ENCODE measurements at regions of chr6 and their contacts with region 1.

Region 1: GRCh38 chr6:117449549-117450439 is 24.1 kb upstream of the ROS1 start:
- DNase-seq: peak; percentile 77
- ATAC-seq: no peak
- H3K4me3 ChIP-seq: no peak overlapping the region; the same call in 1 of the 2 replicates
- H3K27ac ChIP-seq: peak overlapping the region; percentile 79
- H3K4me1 ChIP-seq: peaks cover 36% of the 10 kb centered on the region
- H3K27me3 ChIP-seq: no peaks in the 10 kb centered on the region
- CTCF ChIP-seq: peak; percentile 81

Region 2: GRCh38 chr6:117352466-117353081 is 97.2 kb before region 1 on chr6:
- CTCF ChIA-PET with region 1: no interaction called
- POLR2A ChIA-PET with region 1: no interaction called
- intact Hi-C with region 1: loop called (anchors 1 kb)
- DNase-seq: peak; percentile 68
- ATAC-seq: peak; percentile 67
- H3K4me3 ChIP-seq: no peak overlapping the region
- H3K27ac ChIP-seq: no peak overlapping the region
- H3K4me1 ChIP-seq: peaks cover 4% of the 10 kb centered on the region
- H3K27me3 ChIP-seq: no peaks in the 10 kb centered on the region
- CTCF ChIP-seq: peak; percentile 64

Region 3: DNA sequence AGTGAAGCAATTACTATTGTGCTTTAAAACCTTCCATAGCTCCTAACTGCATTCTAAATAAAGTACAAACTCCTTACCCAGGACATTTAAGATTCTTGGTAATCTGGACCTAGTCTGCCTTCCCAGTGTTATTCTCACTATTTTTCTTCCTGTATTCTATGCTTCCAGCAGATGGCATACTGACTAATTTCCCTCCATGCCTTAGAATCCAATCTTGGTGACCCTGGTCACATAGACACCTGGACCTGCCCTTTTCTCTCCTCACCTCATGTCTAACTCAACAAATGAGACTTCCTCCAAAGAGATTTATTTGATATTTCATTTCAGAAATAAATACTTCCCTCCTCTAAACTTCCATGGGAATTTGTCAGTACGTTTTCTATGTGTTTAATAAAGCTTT is 49.9 kb before region 1 on chr6:
- CTCF ChIA-PET with region 1: interaction called, 3 read pairs
- POLR2A ChIA-PET with region 1: no interaction called
- intact Hi-C with region 1: loop called (anchors 2 kb)
- DNase-seq: peak; percentile 41
- ATAC-seq: peak; percentile 51; the same call in 1 of the 2 replicates
- H3K4me3 ChIP-seq: no peak overlapping the region
- H3K27ac ChIP-seq: no peak overlapping the region
- H3K4me1 ChIP-seq: peaks cover 6% of the 10 kb centered on the region; the same call in 1 of the 2 replicates
- H3K27me3 ChIP-seq: no peaks in the 10 kb centered on the region
- CTCF ChIP-seq: peak; percentile 53

Region 4: DNA sequence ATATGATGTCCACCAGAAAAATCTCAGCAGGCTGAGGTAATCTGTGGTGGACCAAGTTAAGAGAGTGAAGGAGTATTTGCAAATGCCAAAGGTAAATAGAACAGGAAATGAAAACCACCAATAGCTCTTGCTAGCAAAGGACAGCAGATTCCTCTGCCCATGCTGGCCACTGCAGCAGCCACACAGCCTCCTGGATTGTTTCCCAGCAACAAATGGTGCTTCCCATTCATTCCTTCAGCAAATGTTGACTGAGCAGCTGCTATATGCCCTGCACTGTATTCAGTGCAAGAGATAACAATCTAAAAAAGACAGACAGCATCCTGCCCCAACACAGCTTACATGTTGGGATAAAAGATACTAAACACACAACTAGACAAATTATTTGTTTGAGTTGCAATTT is 35.0 kb before region 1 on chr6:
- CTCF ChIA-PET with region 1: no interaction called
- POLR2A ChIA-PET with region 1: no interaction called
- intact Hi-C with region 1: no loop called
- DNase-seq: peak; percentile 59
- ATAC-seq: peak; percentile 86
- H3K4me3 ChIP-seq: no peak overlapping the region
- H3K27ac ChIP-seq: no peak overlapping the region
- H3K4me1 ChIP-seq: peaks cover 18% of the 10 kb centered on the region
- H3K27me3 ChIP-seq: no peaks in the 10 kb centered on the region
- CTCF ChIP-seq: no peak

Region 5: GRCh38 chr6:117498159-117498558 is 48.4 kb after region 1 on chr6:
- CTCF ChIA-PET with region 1: no interaction called
- POLR2A ChIA-PET with region 1: no interaction called
- intact Hi-C with region 1: loop called (anchors 5 kb)
- DNase-seq: peak; percentile 81
- ATAC-seq: peak; percentile 83
- H3K4me3 ChIP-seq: peak overlapping the region; percentile 17; the same call in 1 of the 2 replicates
- H3K27ac ChIP-seq: peak overlapping the region; percentile 60
- H3K4me1 ChIP-seq: peaks cover 45% of the 10 kb centered on the region
- H3K27me3 ChIP-seq: no peaks in the 10 kb centered on the region
- CTCF ChIP-seq: no peak

Region 6: GRCh38 chr6:117602151-117602898 is 152.5 kb after region 1 on chr6 and contains the start of gene GOPC:
- CTCF ChIA-PET with region 1: interaction called, 3 read pairs
- POLR2A ChIA-PET with region 1: no interaction called
- intact Hi-C with region 1: loop called (anchors 1 kb)
- DNase-seq: peak; percentile 96
- ATAC-seq: peak; percentile 93
- H3K4me3 ChIP-seq: peak within 1 kb of the TSS; percentile 93
- H3K27ac ChIP-seq: peak within 1 kb of the TSS; percentile 92
- H3K4me1 ChIP-seq: peaks cover 21% of the 10 kb centered on the region; the same call in 1 of the 2 replicates
- H3K27me3 ChIP-seq: no peaks in the 10 kb centered on the region
- CTCF ChIP-seq: 0 out of 2 replicates have a peak, but pooled peaks have one; percentile 12
- total RNA-seq, gene GOPC: 15.8 and 17.1 TPM in 2 replicates